WTC11 (cell line): ENCODE measurements at regions of chr22 and their contacts with region 1.

Region 1: GRCh38 chr22:17272511-17272991 is 53.3 kb upstream of the ADA2 start:
- DNase-seq: peak; percentile 65
- ATAC-seq: peak; percentile 83
- H3K4me3 Mint-ChIP-seq: peak overlapping the region; percentile 27; the same call in 1 of the 2 replicates
- H3K27ac Mint-ChIP-seq: peak overlapping the region; percentile 98
- H3K4me1 Mint-ChIP-seq: peaks cover 54% of the 10 kb centered on the region
- H3K27me3 Mint-ChIP-seq: no peaks in the 10 kb centered on the region
- CTCF ChIP-seq: no peak

Region 2: GRCh38 chr22:17258015-17258787 is 14.3 kb before region 1 on chr22:
- CTCF ChIA-PET with region 1: interaction called, 38 read pairs
- POLR2A ChIA-PET with region 1: interaction called, 15 read pairs
- DNase-seq: peak; percentile 76
- ATAC-seq: peak; percentile 67
- H3K4me3 Mint-ChIP-seq: peak overlapping the region; percentile 55
- H3K27ac Mint-ChIP-seq: peak overlapping the region; percentile 100
- H3K4me1 Mint-ChIP-seq: peaks cover 74% of the 10 kb centered on the region
- H3K27me3 Mint-ChIP-seq: no peaks in the 10 kb centered on the region
- CTCF ChIP-seq: no peak

Region 3: DNA sequence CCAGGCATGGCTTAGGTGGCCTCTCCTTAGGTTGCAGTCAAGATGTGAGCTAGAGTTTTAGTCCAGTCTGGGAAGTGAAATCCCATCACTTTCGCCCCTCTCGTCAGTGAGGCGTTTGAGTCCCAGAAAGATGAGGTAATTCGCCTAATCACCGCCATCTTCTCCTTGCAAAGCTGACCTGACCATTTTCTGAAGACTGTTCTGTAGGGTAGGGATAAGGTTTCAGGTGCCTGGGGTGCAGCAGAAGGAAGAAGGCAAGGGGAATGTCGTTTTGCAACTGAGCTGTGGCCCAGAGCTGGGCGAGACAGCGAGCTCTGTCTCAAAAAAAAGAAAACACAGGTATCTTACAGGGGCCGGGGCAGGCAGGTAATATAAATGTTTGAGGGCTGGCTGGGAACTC is 35.0 kb after region 1 on chr22:
- CTCF ChIA-PET with region 1: interaction called, 13 read pairs
- POLR2A ChIA-PET with region 1: interaction called, 6 read pairs
- DNase-seq: no peak
- ATAC-seq: peak; percentile 70
- H3K4me3 Mint-ChIP-seq: no peak overlapping the region
- H3K27ac Mint-ChIP-seq: peak overlapping the region; percentile 77
- H3K4me1 Mint-ChIP-seq: peaks cover 18% of the 10 kb centered on the region
- H3K27me3 Mint-ChIP-seq: no peaks in the 10 kb centered on the region; the same call in 1 of the 2 replicates
- CTCF ChIP-seq: no peak

Region 4: GRCh38 chr22:17514084-17514483 is 241.5 kb after region 1 on chr22:
- CTCF ChIA-PET with region 1: no interaction called
- POLR2A ChIA-PET with region 1: no interaction called
- DNase-seq: no peak
- ATAC-seq: no peak
- H3K4me3 Mint-ChIP-seq: no peak overlapping the region
- H3K27ac Mint-ChIP-seq: peak overlapping the region; percentile 9
- H3K4me1 Mint-ChIP-seq: no peaks in the 10 kb centered on the region
- H3K27me3 Mint-ChIP-seq: no peaks in the 10 kb centered on the region
- CTCF ChIP-seq: no peak